ENCODE measurements at regions of chr1 and their contacts with region 1.

Region 1: DNA sequence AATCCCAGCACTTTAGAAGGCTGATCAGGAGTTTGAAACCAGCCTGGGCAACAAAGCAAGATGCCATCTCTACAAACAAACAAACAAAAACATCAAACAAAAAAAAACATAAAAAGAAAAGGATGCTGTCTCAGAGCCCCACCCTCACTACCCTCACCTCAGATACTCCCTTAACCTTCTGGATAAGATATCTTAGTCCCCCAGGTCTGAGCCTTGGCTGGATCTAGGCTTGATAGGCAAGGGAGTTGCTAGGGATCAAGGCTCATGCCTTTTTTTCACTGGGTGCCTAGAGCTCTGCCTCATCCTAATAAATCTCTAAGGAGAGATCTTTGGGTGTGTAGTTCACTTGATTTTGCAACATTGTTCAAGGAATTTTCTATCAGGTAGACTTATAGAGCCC is 7.4 kb downstream of the HDAC1 start:
- DNase-seq: no peak
- ATAC-seq: no peak
- H3K4me3 ChIP-seq: no peak overlapping the region
- H3K27ac ChIP-seq: no peak overlapping the region
- H3K4me1 ChIP-seq: no peaks in the 10 kb centered on the region
- H3K27me3 ChIP-seq: no peaks in the 10 kb centered on the region
- CTCF ChIP-seq: no peak

Region 2: GRCh38 chr1:32249831-32250525 is 49.3 kb before region 1 on chr1:
- intact Hi-C with region 1: loop called in 1 of 2 experiments (anchors 5 kb)
- DNase-seq: peak; percentile 41 to 72
- ATAC-seq: peak in 3 of 4 donors; percentile 29 to 40 (median 34)
- H3K4me3 ChIP-seq: no peak overlapping the region
- H3K27ac ChIP-seq: peak overlapping the region; percentile 69
- H3K4me1 ChIP-seq: peaks cover 28% of the 10 kb centered on the region
- H3K27me3 ChIP-seq: peaks cover 0 to 2% (median 0%) of the 10 kb centered on the region in 3 donors
- CTCF ChIP-seq: no peak

Measured in psoas muscle (tissue), 8 donors.